ENCODE measurements at regions of chr14 and their contacts with region 1.

Region 1: GRCh38 chr14:32576088-32576795 is 247.1 kb downstream of the AKAP6 start:
- DNase-seq: no peak
- ATAC-seq: peak; percentile 62 to 85 (median 78)
- H3K4me3 ChIP-seq: no peak overlapping the region
- H3K27ac ChIP-seq: no peak overlapping the region
- H3K4me1 ChIP-seq: peaks cover 6% of the 10 kb centered on the region
- H3K27me3 ChIP-seq: no peaks in the 10 kb centered on the region
- CTCF ChIP-seq: peak; percentile 95

Region 2: GRCh38 chr14:32702562-32702961 is 126.3 kb after region 1 on chr14:
- intact Hi-C with region 1: loop called in 1 of 2 experiments (anchors 10 kb)
- DNase-seq: peak; percentile 27 to 49
- ATAC-seq: peak; percentile 65 to 85 (median 76)
- H3K4me3 ChIP-seq: no peak overlapping the region
- H3K27ac ChIP-seq: peak overlapping the region; percentile 48
- H3K4me1 ChIP-seq: peaks cover 34% of the 10 kb centered on the region
- H3K27me3 ChIP-seq: no peaks in the 10 kb centered on the region
- CTCF ChIP-seq: no peak

Region 3: GRCh38 chr14:33432407-33433023 is 856.3 kb after region 1 on chr14:
- intact Hi-C with region 1: loop called in 1 of 2 experiments (anchors 10 kb)
- DNase-seq: no peak
- ATAC-seq: no peak
- H3K4me3 ChIP-seq: no peak overlapping the region
- H3K27ac ChIP-seq: no peak overlapping the region
- H3K4me1 ChIP-seq: no peaks in the 10 kb centered on the region
- H3K27me3 ChIP-seq: no peaks in the 10 kb centered on the region
- CTCF ChIP-seq: peak; percentile 34

Region 4: GRCh38 chr14:33792720-33793368 is 1216.6 kb after region 1 on chr14:
- intact Hi-C with region 1: loop called (anchors 5 to 10 kb)
- DNase-seq: peak; percentile 71 to 86
- ATAC-seq: peak; percentile 84 to 97 (median 88)
- H3K4me3 ChIP-seq: peak overlapping the region; percentile 58
- H3K27ac ChIP-seq: no peak overlapping the region
- H3K4me1 ChIP-seq: peaks cover 4% of the 10 kb centered on the region
- H3K27me3 ChIP-seq: no peaks in the 10 kb centered on the region
- CTCF ChIP-seq: peak; percentile 96

Measured in psoas muscle (tissue), 8 donors.